SK-N-SH (cell line): ENCODE measurements at regions of chr7 and their contacts with region 1.

Region 1: GRCh38 chr7:28062197-28062991 is 118.2 kb downstream of the JAZF1 start:
- DNase-seq: peak; percentile 62
- H3K4me3 ChIP-seq: no peak overlapping the region
- H3K27ac ChIP-seq: no peak overlapping the region
- H3K4me1 ChIP-seq: peaks cover 0 to 8% of the 10 kb centered on the region in 2 experiments; a peak in 2 of 4 replicates
- H3K27me3 ChIP-seq: no peaks in the 10 kb centered on the region
- CTCF ChIP-seq: peak; percentile 88
- EP300 ChIP-seq: no peak
- RAD21 ChIP-seq: peak; percentile 92

Region 2: GRCh38 chr7:28038175-28038797 is 24.1 kb before region 1 on chr7:
- CTCF ChIA-PET with region 1: interaction called, 13 read pairs
- POLR2A ChIA-PET with region 1: no interaction called
- DNase-seq: no peak
- H3K4me3 ChIP-seq: peak overlapping the region in 1 of 2 experiments; percentile 1; a peak in 1 of 4 replicates
- H3K27ac ChIP-seq: peak overlapping the region; percentile 89 to 96; a peak in 3 of 4 replicates
- H3K4me1 ChIP-seq: peaks cover 12 to 57% of the 10 kb centered on the region in 2 experiments
- H3K27me3 ChIP-seq: no peaks in the 10 kb centered on the region
- CTCF ChIP-seq: no peak
- EP300 ChIP-seq: no peak
- RAD21 ChIP-seq: no peak

Region 3: DNA sequence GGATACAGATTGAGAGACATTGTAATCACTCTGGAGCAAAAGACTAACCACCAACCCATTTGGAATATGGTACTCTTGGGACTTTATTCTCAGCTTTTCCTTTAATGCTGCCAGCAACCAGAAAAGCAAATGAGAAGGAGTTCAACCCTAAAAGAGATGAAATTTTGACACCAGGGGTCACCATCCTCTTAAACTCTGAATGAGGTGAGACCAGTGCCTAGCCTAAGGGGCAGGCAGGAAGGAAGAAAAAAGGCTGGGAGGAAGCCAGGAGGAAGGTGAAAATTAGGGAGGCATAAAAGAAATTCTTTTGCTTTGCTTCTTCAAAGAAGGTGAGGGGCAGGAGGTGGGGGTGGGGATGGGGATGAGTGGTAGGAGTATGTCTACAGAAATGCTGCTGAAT is 17.6 kb before region 1 on chr7:
- CTCF ChIA-PET with region 1: interaction called, 25 read pairs
- POLR2A ChIA-PET with region 1: no interaction called
- DNase-seq: no peak
- H3K4me3 ChIP-seq: no peak overlapping the region
- H3K27ac ChIP-seq: no peak overlapping the region
- H3K4me1 ChIP-seq: peaks cover 0 to 15% of the 10 kb centered on the region in 2 experiments; a peak in 2 of 4 replicates
- H3K27me3 ChIP-seq: no peaks in the 10 kb centered on the region
- CTCF ChIP-seq: no peak; the same call in 1 of the 2 replicates
- EP300 ChIP-seq: no peak
- RAD21 ChIP-seq: no peak

Region 4: DNA sequence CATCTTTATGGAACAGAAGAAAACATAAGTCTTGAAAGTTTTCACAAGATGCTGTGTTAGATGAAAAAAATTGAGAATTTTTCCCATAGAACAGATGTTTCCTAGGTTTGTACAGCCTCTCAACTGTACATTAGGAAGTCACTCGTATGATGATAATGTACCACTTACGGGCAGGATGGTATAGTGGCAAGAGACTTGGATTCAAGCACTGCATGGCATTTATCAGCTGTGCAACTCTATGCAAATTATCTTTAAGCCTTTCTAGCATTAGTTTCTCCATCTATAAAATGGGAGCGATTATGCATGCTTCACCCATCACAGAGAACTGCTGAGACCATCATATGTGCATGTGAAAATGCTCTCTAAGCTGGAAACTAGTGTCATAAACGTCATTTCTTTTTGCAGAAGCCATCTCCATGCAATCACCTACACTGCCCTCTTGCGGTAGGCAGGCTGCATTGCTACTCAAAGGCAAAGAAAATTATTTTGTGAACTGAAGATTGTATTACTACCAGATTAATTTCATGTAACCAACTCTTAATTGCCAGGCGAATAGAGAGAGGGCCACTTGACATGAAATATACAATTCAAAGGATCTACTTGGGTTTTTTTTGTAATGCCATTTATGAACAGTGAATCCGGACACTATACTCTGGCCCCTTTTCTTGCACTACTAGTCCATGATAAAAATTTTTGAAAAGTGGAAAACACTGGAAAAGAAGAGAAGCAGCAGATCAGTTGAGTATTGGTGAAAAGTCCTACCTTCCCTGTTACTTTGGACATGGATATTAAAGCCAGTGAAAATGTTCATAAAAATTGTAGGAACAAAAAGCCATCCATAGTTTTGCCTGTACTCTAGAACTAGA is 15.9 kb after region 1 on chr7:
- CTCF ChIA-PET with region 1: interaction called, 651 read pairs
- POLR2A ChIA-PET with region 1: no interaction called
- DNase-seq: peak; percentile 52
- H3K4me3 ChIP-seq: peak overlapping the region in 1 of 2 experiments; percentile 16; a peak in 1 of 4 replicates
- H3K27ac ChIP-seq: peak overlapping the region in 1 of 2 experiments; percentile 96; a peak in 2 of 4 replicates
- H3K4me1 ChIP-seq: peaks cover 13 to 39% of the 10 kb centered on the region in 2 experiments
- H3K27me3 ChIP-seq: no peaks in the 10 kb centered on the region
- CTCF ChIP-seq: peak; percentile 100
- EP300 ChIP-seq: no peak; a peak in 1 of 4 replicates
- RAD21 ChIP-seq: peak; percentile 80

Region 5: DNA sequence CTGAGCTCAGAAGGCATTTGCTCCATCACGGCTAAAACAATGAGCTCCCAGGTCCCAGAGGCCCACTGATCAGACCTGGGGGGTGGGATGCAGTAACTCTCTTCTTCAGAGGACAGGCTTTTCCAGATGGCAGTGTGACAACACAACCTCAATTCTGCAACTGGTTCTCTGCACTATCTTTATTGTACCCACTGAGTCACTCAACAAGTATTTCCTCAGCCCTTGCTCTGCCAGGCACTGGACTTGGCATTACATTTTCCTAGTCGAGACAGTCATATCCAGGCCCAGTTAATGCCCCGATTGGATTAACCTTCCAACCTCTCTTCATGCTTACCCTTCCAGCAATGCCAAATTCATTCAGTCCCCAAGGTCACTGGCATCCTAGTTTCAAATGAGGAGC is 45.6 kb after region 1 on chr7:
- CTCF ChIA-PET with region 1: interaction called, 828 read pairs
- POLR2A ChIA-PET with region 1: no interaction called
- DNase-seq: no peak
- H3K4me3 ChIP-seq: no peak overlapping the region
- H3K27ac ChIP-seq: no peak overlapping the region
- H3K4me1 ChIP-seq: peaks cover 4 to 16% of the 10 kb centered on the region in 2 experiments; a peak in 2 of 4 replicates
- H3K27me3 ChIP-seq: no peaks in the 10 kb centered on the region
- CTCF ChIP-seq: no peak
- EP300 ChIP-seq: no peak
- RAD21 ChIP-seq: no peak